Breast epithelium (tissue), 4 donors: ENCODE measurements at regions of chr5 and their contacts with region 1.

Region 1: DNA sequence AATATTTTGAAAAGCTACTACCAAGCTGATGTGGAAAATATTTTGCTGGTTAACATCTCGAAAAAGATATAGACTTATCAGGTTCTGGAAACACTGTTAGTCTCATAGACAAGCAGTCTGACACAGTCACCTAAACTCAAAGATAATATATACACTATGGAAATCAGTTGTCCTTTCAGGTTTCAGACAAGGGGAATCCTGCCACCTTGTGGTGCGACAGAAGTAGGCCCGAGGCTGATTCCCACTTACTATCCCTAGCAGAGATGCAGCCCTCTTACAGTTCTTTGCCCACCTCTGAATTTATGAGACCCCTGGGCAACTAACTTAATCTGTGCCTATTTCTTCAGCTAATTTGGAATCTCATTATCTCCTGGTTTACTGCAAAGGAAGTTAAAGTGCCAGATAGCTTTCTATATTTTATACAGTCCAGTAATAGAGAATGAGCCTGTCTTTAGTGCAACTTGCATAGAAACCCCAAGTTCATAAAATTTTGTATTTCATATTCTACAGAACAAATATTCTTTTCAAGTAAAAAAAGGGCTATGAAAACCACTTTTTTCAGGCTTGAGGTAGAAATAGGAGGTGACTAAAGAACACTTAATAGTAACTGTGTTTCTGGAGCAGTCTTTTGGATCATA is 16.9 kb downstream of the RAD1 start:
- DNase-seq: peak; percentile 40 to 62
- H3K4me3 ChIP-seq: no peak overlapping the region
- H3K27ac ChIP-seq: no peak overlapping the region
- H3K4me1 ChIP-seq: no peaks in the 10 kb centered on the region
- H3K27me3 ChIP-seq: no peaks in the 10 kb centered on the region
- CTCF ChIP-seq: peak; percentile 74 to 86 (median 75)
- POLR2A ChIP-seq: no peak

Region 2: GRCh38 chr5:34486160-34486848 is 412.1 kb before region 1 on chr5:
- intact Hi-C with region 1: loop called (anchors 10 kb)
- DNase-seq: peak; percentile 76 to 86
- H3K4me3 ChIP-seq: no peak overlapping the region
- H3K27ac ChIP-seq: peak overlapping the region in 1 of 2 donors; percentile 86
- H3K4me1 ChIP-seq: no peaks in the 10 kb centered on the region
- H3K27me3 ChIP-seq: no peaks in the 10 kb centered on the region
- CTCF ChIP-seq: peak; percentile 81 to 90 (median 85)
- POLR2A ChIP-seq: no peak

Region 3: DNA sequence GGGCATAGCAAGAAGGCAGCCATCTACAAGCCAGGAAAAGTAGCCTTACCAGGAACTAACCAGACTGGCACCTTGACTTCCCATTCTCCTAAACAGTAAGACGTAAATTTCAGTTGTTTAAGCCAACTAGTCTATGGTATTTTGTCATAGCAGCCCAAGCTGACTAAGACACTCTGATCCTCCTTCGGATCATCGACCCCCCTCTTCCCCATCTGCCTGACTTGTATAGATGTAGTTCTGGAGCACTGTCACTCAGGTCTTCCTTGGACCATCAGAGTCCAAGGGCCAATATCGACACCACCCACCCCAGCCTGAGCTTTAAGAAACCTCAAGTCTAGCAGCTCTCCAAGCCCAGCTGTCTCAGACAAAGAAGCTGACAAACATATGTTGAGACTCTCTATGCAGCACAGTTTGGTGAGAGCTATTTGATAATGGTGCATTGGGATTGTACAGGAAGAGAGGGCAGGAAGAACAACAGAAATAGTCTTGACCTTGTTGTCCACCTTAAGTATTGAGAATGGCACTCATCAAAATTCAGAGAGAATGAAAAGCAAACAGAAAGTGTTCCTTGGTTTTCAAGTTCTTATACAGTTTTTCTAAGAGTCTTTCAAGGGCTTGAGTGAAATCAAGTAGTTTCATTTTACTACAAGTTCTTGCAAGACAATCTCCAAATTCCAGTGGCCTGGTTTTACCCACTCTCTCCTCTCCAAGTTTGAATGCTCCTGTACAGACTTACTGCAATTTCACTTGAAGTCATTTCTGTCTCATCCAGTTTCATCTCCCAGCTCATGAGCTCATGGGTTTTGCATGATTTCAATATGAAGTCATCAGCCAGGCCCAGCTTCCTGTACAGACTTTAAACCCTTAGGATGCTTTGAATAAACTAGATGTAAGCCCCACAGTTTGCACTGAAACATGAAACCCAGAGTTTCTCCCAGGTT is 364.5 kb before region 1 on chr5:
- intact Hi-C with region 1: no loop called
- DNase-seq: no peak
- H3K4me3 ChIP-seq: no peak overlapping the region
- H3K27ac ChIP-seq: peak overlapping the region; percentile 13 to 54
- H3K4me1 ChIP-seq: no peaks in the 10 kb centered on the region
- H3K27me3 ChIP-seq: no peaks in the 10 kb centered on the region
- CTCF ChIP-seq: no peak
- POLR2A ChIP-seq: no peak